PC-9 (cell line): ENCODE measurements at regions of chr4 and their contacts with region 1.

Region 1: DNA sequence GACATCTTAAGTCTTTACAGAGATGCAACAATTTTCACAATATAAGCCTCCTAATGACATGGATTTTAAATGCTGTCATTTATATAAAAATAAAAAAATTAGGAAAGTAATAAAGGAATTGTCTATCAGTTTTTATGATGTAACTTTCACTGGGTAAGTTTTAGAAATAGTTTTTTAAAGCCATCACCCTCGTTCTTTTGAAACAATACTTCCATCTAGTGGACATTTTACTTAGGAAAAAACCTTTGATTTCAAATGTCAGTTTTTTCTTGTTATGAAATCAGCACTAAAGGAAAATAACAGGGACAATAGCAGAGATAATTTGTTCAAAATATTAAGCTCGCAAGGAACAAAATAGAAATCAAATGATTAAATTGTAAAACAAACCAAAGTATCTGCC is 24.3 kb upstream of the NDNF start:
- DNase-seq: no peak
- H3K4me3 ChIP-seq: no peak overlapping the region
- H3K27ac ChIP-seq: no peak overlapping the region
- H3K4me1 ChIP-seq: no peaks in the 10 kb centered on the region
- H3K27me3 ChIP-seq: no peaks in the 10 kb centered on the region
- CTCF ChIP-seq: peak; percentile 77

Region 2: GRCh38 chr4:120071192-120071795 is 1025.3 kb before region 1 on chr4:
- CTCF ChIA-PET with region 1: no interaction called
- POLR2A ChIA-PET with region 1: no interaction called
- intact Hi-C with region 1: loop called (anchors 1 kb)
- DNase-seq: peak in 1 of 2 experiments; percentile 18
- H3K4me3 ChIP-seq: no peak overlapping the region
- H3K27ac ChIP-seq: no peak overlapping the region
- H3K4me1 ChIP-seq: peaks cover 9% of the 10 kb centered on the region
- H3K27me3 ChIP-seq: no peaks in the 10 kb centered on the region
- CTCF ChIP-seq: peak; percentile 72

Region 3: GRCh38 chr4:120156120-120156718 is 940.4 kb before region 1 on chr4:
- CTCF ChIA-PET with region 1: no interaction called
- POLR2A ChIA-PET with region 1: no interaction called
- intact Hi-C with region 1: loop called (anchors 1 kb)
- DNase-seq: peak; percentile 12 to 41
- H3K4me3 ChIP-seq: no peak overlapping the region
- H3K27ac ChIP-seq: no peak overlapping the region
- H3K4me1 ChIP-seq: no peaks in the 10 kb centered on the region
- H3K27me3 ChIP-seq: no peaks in the 10 kb centered on the region
- CTCF ChIP-seq: peak; percentile 87

Region 4: GRCh38 chr4:120718979-120719566 is 377.6 kb before region 1 on chr4:
- CTCF ChIA-PET with region 1: no interaction called
- POLR2A ChIA-PET with region 1: no interaction called
- intact Hi-C with region 1: loop called (anchors 10 kb)
- DNase-seq: no peak
- H3K4me3 ChIP-seq: no peak overlapping the region
- H3K27ac ChIP-seq: no peak overlapping the region
- H3K4me1 ChIP-seq: no peaks in the 10 kb centered on the region
- H3K27me3 ChIP-seq: no peaks in the 10 kb centered on the region
- CTCF ChIP-seq: peak; percentile 54; the same call in 1 of the 2 replicates